Brain microvascular endothelial cell (primary cell): ENCODE measurements at regions of chr17 and their contacts with region 1.

Region 1: GRCh38 chr17:6421700-6422604 is 13.0 kb downstream of the AIPL1 start:
- DNase-seq: peak; percentile 63
- H3K4me3 ChIP-seq: no peak overlapping the region
- H3K27ac ChIP-seq: no peak overlapping the region
- H3K27me3 ChIP-seq: no peaks in the 10 kb centered on the region
- CTCF ChIP-seq: peak; percentile 90

Region 2: DNA sequence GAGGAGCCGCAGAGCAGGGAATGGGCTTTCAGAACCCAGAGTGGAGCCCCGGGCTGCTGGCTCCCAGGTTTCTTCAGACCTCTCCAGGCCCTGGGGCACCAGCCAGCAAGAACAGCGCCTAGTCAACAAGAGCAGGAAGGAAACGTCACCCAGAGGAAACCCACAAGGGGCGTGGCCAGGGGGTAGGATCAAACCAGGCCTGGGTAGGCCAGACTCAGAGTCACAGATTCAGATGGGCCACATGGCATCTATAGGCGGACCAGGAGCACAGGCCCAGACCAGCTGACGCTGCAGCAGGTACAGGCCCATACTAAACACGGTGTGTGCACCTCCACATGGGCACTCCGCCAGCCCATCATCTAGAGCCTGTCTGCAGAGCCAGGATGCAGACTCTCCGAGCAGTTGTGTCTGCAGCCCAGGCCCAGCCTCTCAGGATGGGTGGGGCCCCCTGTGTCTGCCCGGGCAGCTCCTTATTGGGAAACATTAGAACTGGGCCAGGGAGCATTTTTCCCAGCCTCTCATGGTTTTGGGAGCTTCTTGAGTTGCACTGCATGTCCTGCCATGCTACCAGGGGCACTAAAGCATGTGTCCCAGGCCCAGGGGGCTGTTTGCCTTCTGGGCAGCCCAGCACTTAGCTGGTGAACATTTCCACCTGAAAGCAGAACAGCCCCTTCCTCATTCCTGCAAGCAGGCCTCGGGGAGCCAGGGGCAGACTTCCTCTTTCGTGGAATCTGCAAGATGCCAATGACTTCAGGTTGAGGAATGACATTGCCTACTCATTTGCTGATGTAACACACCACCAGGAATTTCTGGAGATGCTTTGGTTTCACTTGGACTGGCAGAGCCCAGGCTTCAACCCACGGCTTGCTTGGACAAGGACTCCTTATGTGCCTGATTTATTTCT is 837.3 kb before region 1 on chr17 and contains the start of gene NLRP1:
- in situ Hi-C with region 1: loop called (anchors 25 kb)
- DNase-seq: peak; percentile 87
- H3K4me3 ChIP-seq: peak within 1 kb of the TSS; percentile 44
- H3K27ac ChIP-seq: peak within 1 kb of the TSS; percentile 50
- H3K27me3 ChIP-seq: no peaks in the 10 kb centered on the region
- CTCF ChIP-seq: no peak

Region 3: DNA sequence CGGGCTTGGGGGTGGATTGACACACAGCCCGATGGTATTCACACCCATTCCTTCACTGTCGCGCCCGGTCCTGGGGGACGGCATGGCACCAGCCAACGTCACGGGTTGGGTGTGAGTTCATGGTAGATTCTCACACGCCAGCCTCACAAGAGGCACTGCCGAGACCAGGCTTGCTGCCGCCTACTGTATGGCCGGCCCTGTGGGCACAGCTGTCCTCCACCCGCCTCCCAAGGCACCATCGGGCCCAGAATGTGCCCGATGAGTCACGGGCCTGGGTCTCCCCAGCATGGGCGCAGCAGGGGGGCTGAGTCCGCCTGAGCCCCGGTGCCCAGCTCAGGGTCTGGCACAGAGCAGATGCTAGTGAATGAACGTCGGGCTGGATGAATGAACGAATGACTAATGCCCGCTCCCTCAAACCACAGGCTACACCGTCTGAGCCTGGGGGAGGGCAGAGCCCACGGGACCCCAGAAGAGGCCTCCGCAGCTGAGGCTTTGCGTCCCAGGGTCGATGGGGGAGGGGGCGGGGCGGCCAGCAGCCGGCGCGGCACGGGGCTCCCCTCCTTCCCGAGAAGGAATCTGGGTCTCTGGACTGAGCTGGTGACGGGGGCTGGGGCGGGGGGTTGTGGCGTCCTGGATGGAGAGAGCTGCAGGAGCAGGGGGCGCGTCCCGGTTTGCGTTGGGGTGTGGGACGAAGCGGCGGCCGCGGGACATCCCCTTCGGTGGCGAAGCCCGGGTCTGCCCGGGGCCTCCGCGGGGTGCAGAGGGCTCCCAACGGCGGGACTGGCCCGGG is 133.6 kb after region 1 on chr17:
- in situ Hi-C with region 1: no loop called
- DNase-seq: no peak
- H3K4me3 ChIP-seq: peak overlapping the region; percentile 42
- H3K27ac ChIP-seq: no peak overlapping the region
- H3K27me3 ChIP-seq: peaks cover 19% of the 10 kb centered on the region
- CTCF ChIP-seq: peak; percentile 1